AG04450 (cell line): ENCODE measurements at regions of chr7 and their contacts with region 1.

Region 1: DNA sequence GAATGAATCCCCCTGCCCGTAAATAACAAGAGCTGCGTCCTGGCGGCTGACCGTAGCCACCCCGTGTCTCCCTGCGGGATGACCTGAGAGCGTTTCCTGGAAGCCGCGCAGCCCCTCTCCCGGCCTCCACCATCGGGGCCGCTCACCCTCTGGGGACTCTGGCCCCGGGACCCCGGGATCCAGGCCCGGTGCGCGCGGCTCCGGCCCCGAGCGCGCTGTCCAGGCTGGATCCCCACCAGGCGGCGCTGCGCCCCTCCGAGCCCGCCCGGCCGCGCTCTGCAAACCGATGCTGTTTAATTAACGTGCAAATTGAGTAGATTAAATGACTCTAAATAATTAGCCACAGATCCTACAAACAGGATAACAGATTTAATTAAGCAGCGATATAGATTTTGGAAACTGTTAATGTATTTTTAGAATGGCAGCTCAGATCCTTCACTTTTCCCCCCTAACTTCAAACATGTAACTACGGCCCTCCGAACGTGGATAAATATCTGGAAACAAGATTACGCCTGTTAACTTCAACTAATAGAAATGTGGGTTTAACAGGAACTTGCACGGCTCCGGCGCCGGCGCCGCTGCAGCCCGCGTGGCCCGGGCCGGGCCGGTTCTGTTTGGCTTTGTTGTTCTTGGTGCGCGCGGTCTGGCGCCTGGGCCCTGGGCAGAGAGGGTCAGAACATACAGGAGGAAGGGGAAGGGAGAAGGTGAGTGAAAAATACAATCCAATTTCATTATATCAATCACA is 7.1 kb upstream of the UNCX start:
- DNase-seq: no peak
- H3K4me3 ChIP-seq: no peak overlapping the region
- H3K27ac ChIP-seq: no peak overlapping the region
- H3K27me3 ChIP-seq: peaks cover 82% of the 10 kb centered on the region
- CTCF ChIP-seq: peak; percentile 65

Region 2: DNA sequence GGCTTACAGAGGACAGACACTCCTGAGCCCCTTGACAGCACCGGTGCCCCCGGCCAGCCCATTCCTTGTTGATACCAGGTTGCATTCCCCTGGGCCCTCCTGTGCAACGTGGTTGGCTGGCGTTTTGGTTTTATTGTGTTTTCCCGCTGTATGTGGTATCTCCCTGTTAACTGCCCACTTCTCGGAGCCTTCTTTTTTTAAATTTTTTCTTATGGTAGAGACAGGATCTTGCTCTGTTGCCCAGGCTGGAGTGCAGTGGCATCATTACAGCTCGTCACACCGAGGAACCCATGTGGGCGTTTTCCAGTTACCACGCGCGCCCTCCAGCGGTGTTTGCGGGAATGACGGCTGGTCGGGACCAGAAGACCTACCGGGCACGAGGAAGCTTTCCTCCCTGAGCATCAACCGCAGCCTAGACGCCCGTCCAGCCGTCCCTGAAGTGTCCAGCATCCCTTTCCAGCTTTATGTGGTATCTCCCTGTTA is 48.7 kb before region 1 on chr7:
- CTCF ChIA-PET with region 1: no interaction called
- POLR2A ChIA-PET with region 1: no interaction called
- DNase-seq: no peak
- H3K4me3 ChIP-seq: no peak overlapping the region
- H3K27ac ChIP-seq: no peak overlapping the region
- H3K27me3 ChIP-seq: peaks cover 10% of the 10 kb centered on the region
- CTCF ChIP-seq: peak; percentile 54

Region 3: DNA sequence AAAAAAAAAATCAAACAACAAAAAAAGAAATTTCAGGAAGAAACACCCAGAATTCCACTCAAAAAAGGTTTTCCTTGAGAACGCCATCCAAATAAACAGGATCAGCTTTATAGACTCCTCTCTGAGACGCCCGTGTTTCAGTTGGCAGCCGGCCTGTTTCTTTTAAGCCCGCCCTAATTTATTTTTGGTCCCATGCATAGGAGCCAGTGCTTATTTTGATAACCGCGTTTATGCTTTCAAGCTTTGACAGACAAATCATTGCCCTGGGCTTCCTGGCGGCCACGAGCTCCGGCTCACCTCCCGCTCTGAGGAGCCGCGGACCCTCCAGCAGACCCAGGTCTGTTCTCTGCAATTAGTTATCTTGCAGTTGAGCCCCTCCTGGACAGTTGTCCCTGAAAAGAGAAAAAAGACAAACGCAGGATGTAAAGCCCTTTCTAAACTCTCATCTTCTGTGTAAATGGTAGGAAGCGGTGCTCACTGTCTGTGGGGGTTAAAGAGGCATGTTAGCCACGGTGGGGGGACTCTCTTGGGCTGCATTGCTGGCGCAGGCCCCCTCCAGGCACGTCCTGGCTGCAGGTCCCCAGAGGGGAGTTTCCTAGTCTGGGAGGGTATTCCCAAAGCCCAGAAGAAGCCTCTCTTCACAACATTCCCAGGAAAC is 15.2 kb before region 1 on chr7:
- CTCF ChIA-PET with region 1: interaction called, 10 read pairs
- POLR2A ChIA-PET with region 1: no interaction called
- DNase-seq: no peak
- H3K4me3 ChIP-seq: no peak overlapping the region
- H3K27ac ChIP-seq: no peak overlapping the region
- H3K27me3 ChIP-seq: peaks cover 63% of the 10 kb centered on the region
- CTCF ChIP-seq: no peak

Region 4: GRCh38 chr7:1380821-1381580 is 155.4 kb after region 1 on chr7:
- CTCF ChIA-PET with region 1: interaction called, 12 read pairs
- POLR2A ChIA-PET with region 1: no interaction called
- DNase-seq: no peak
- H3K4me3 ChIP-seq: no peak overlapping the region
- H3K27ac ChIP-seq: no peak overlapping the region
- H3K27me3 ChIP-seq: peaks cover 19% of the 10 kb centered on the region
- CTCF ChIP-seq: no peak

Region 5: GRCh38 chr7:1403638-1404459 is 178.2 kb after region 1 on chr7:
- CTCF ChIA-PET with region 1: interaction called, 10 read pairs
- POLR2A ChIA-PET with region 1: no interaction called
- DNase-seq: no peak
- H3K4me3 ChIP-seq: no peak overlapping the region
- H3K27ac ChIP-seq: no peak overlapping the region
- H3K27me3 ChIP-seq: peaks cover 60% of the 10 kb centered on the region
- CTCF ChIP-seq: peak; percentile 28